ENCODE measurements at regions of chr12 and their contacts with region 1.

Region 1: DNA sequence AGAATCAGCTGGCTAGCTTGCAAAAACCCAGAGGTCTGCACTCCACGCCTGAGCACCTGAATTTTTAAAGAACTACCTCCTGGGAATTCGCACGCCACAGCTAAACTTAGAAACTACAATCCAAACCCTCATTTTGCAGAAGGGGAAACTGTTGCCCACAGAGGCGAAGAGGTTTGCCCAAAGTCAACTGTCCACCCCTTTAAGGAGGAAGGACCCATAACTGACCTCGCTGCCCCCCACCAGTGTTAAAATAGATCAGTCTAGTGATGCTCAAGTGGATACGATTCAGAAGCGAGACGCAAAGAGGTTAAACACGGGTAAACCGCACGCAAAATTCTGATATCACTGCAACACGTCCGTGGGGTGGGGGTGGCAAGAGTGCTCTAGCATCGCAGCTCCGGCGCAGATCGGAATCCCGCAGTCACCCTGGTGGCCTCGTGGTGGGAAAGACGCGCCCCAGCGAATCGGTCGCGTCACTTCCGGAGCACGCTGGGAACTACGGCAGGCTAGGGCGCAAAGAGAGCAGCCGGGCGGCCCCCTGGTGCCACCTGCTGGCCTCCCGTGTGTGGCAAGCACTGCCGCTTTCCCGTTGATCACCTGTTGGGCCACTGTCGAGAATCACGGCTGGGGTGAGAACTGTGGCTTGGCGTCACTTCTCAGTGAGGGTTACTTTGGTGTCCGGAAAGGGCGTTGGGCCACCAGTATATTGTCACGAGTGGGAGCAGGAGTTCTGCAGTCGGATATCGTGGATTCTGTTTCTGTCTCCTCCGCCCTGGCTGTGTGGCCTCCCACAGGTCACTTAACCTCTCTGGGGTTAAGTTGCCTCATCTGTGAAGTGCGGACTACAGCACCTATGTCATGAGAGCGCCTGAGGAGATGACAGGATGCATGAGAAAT is at the start of gene ALKBH2:
- DNase-seq: peak; percentile 98
- H3K4me3 Mint-ChIP-seq: peak within 1 kb of the TSS; percentile 82
- H3K27ac Mint-ChIP-seq: peak within 1 kb of the TSS; percentile 84
- H3K4me1 Mint-ChIP-seq: peaks cover 40% of the 10 kb centered on the region
- H3K27me3 Mint-ChIP-seq: no peaks in the 10 kb centered on the region
- total RNA-seq, gene ALKBH2: 44.8 and 46.2 TPM in 2 replicates

Region 2: DNA sequence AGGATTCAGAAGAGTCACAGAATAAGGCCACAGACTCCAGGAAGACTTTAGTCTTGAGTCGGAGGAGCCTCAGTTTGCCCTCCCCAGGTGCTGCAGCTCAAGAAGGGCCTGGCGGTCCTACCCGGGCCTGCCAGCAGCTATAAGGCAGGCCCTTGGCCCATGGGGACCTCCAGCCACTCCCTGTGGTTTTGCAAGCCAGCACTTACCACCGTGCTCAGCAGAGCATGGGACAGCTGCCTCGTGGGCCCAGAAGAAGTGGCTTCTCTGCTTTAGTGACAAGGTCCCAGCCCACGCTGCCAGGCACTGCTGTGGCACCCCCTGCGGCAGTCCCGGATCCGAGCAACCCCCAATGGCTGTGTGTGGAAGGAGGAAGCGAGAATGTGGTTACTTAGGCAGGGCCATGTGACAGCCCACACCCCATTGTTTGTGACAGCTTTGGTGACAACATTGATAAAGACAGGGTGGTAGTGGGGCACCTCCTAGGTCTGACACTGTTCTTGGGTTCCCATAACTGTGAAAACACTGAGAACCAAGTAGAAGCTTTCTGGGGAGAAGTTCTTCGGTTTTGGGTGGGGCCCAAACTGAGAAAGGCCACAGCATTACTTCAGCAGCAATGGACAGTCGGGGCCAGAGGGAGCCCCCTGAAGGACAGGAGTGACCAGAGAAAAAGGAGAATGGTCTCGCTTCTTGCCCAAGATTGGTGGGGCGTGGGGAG is 459.6 kb before region 1 on chr12 and contains the start of gene SELPLG:
- intact Hi-C with region 1: loop called (anchors 5 kb)
- DNase-seq: peak; percentile 95
- H3K4me3 Mint-ChIP-seq: peak within 1 kb of the TSS; percentile 98
- H3K27ac Mint-ChIP-seq: peak within 1 kb of the TSS; percentile 99
- H3K4me1 Mint-ChIP-seq: peaks cover 73% of the 10 kb centered on the region
- H3K27me3 Mint-ChIP-seq: no peaks in the 10 kb centered on the region
- total RNA-seq, gene SELPLG: 47.4 and 49.4 TPM in 2 replicates

Region 3: GRCh38 chr12:108731105-108731865 is 362.0 kb before region 1 on chr12 and contains the start of gene CORO1C:
- intact Hi-C with region 1: loop called (anchors 5 kb)
- DNase-seq: peak; percentile 99
- H3K4me3 Mint-ChIP-seq: peak within 1 kb of the TSS; percentile 94
- H3K27ac Mint-ChIP-seq: peak within 1 kb of the TSS; percentile 95
- H3K4me1 Mint-ChIP-seq: peaks cover 41% of the 10 kb centered on the region
- H3K27me3 Mint-ChIP-seq: peaks cover 6% of the 10 kb centered on the region
- total RNA-seq, gene CORO1C: 64.6 and 70.1 TPM in 2 replicates

Region 4: GRCh38 chr12:108838194-108839017 is 254.9 kb before region 1 on chr12:
- intact Hi-C with region 1: no loop called
- DNase-seq: peak; percentile 91
- H3K4me3 Mint-ChIP-seq: peak overlapping the region; percentile 74
- H3K27ac Mint-ChIP-seq: peak overlapping the region; percentile 95
- H3K4me1 Mint-ChIP-seq: peaks cover 47% of the 10 kb centered on the region
- H3K27me3 Mint-ChIP-seq: no peaks in the 10 kb centered on the region

Region 5: GRCh38 chr12:108849653-108850052 is 243.6 kb before region 1 on chr12:
- intact Hi-C with region 1: no loop called
- DNase-seq: no peak
- H3K4me3 Mint-ChIP-seq: no peak overlapping the region
- H3K27ac Mint-ChIP-seq: peak overlapping the region; percentile 34
- H3K4me1 Mint-ChIP-seq: peaks cover 14% of the 10 kb centered on the region
- H3K27me3 Mint-ChIP-seq: no peaks in the 10 kb centered on the region

Region 6: DNA sequence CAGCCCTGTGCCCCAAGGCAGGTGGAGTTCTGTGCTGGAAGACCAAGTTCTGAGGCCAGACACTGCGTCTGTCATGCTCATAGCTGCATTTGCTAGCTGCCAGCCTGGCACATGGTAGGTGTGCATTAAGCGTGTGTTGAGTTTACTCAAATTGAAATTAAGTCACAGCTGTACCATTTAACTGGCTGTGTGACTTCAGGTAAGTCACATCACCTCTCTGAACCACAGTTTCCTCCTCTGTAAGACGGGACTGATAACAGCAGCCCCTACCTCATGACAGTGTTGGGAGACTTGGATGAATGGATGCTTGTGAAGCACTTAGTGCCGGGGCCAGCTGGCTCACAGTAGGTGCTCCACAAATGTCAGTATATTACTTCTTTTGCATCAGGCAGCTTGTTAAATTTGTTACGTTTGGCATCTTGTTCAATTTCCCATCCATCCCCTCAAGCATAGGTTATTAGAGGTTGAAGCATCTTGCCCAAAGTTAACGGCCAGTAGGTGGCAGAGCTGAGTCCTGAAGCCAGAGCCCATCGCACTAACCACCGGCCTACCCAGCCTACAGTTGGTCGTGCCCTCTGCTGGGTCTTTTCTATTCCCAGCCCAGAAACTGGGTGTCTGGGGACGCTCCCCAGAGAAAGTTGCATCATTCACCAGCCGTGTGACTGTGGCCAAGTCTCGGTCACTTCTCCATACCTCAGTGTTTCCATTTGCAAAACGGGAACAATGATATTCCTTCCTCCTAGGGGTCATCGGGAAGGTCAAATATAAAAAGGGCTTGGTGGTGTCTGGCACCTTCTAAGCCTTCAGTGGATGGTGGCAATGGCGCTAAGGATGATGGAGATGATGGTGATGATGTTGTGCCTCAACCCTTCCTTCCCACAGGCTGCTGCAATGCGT is 208.9 kb before region 1 on chr12:
- intact Hi-C with region 1: loop called (anchors 1 kb)
- DNase-seq: peak; percentile 88
- H3K4me3 Mint-ChIP-seq: no peak overlapping the region
- H3K27ac Mint-ChIP-seq: no peak overlapping the region
- H3K4me1 Mint-ChIP-seq: no peaks in the 10 kb centered on the region
- H3K27me3 Mint-ChIP-seq: no peaks in the 10 kb centered on the region

Region 7: DNA sequence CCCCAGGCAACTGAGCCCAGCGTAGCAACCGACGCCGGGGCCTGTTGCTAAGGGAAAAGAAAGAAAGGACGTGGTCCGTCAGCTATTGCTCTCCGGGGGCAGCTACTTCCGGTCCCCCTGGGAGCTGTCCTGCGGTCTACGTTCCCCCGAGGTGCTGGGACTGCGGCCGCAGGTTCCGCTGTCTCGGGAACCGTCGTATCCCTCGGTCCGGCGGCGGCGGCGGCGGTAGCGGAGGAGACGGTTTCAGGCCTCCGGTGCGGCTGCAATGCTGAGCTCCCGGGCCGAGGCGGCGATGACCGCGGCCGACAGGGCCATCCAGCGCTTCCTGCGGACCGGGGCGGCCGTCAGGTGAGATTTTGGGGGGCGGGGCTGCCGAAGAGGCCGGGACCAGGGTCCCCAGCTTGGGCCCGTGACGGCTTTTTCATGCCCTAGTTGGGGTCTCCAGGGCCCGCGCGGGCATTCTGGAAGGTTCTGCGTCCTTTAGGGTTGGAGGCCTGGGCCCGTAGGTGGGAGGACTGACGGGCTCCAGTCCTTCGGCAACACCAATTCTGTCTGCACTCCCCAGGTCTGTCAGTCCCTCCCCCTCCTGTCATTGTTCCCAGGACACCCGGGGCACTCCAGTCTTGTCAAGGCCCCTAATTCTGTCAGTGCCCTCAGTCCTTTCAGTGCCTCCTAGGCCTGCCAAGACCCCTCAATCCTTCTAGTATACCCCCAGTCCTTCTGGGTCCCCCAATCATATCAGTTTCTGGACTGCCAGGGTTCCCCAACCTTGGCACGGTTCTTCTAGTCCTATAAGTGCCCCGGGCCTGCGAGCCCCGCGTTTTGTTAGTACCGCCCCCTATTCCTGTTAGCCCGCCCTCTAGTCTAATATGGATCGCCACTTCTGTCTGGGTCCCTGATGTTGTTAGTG is 40.6 kb before region 1 on chr12 and contains the start of gene USP30:
- intact Hi-C with region 1: loop called (anchors 1 kb)
- DNase-seq: peak; percentile 95
- H3K4me3 Mint-ChIP-seq: peak within 1 kb of the TSS; percentile 86
- H3K27ac Mint-ChIP-seq: peak within 1 kb of the TSS; percentile 95
- H3K4me1 Mint-ChIP-seq: peaks cover 8% of the 10 kb centered on the region
- H3K27me3 Mint-ChIP-seq: no peaks in the 10 kb centered on the region
- total RNA-seq, gene USP30: 6.6 and 6.9 TPM in 2 replicates

Region 8: DNA sequence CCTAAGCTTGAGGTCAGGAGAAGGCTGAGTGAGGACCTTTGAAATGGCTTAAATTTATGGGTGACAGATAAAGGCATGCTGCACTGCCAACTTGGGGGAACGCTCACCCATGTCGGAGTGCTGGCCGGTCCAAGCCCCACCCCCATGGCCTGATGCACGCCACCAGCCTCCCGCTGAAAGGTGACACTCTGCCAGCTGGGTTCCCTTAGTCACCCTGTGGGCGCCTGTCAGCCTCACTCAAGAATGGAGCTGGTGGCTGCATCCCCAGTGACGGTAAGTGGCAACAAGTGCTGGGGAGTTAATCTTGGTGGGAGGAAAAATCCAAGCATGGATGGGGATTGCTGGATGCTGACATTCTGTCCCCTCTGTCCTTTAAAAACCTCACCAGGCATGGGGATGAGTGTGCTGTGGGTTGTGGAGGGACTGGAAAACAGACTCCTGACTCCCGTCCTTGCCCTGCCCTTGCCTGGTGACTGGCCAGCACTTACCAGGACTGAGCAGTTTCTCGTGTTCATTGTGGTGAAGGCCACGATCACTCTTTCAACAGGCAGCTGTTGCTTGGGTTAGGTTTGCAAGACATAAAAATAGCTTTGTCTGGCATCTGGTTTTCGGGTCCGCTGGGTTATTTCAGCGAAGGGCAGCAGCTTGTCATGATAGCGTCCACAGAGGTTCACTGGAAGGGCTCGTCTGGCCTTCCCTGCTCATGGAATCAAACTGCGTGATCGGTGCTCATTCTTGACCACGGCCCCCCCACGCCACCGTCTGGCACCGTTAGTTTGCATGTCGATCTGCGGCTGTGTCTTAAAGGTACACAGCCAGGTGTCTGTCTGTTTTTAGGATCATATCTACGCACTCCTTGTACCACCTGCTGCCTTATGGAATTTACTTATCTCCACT is 38.1 kb after region 1 on chr12:
- intact Hi-C with region 1: no loop called
- DNase-seq: no peak
- H3K4me3 Mint-ChIP-seq: no peak overlapping the region
- H3K27ac Mint-ChIP-seq: no peak overlapping the region
- H3K4me1 Mint-ChIP-seq: no peaks in the 10 kb centered on the region
- H3K27me3 Mint-ChIP-seq: peaks cover 4% of the 10 kb centered on the region